ENCODE measurements at regions of chr3 and their contacts with region 1.

Region 1: GRCh38 chr3:113730550-113730949 is 15.5 kb downstream of the NAA50 start:
- DNase-seq: no peak
- H3K4me3 ChIP-seq: no peak overlapping the region
- H3K27ac ChIP-seq: no peak overlapping the region
- H3K4me1 ChIP-seq: no peaks in the 10 kb centered on the region
- H3K27me3 ChIP-seq: no peaks in the 10 kb centered on the region
- CTCF ChIP-seq: no peak

Region 2: DNA sequence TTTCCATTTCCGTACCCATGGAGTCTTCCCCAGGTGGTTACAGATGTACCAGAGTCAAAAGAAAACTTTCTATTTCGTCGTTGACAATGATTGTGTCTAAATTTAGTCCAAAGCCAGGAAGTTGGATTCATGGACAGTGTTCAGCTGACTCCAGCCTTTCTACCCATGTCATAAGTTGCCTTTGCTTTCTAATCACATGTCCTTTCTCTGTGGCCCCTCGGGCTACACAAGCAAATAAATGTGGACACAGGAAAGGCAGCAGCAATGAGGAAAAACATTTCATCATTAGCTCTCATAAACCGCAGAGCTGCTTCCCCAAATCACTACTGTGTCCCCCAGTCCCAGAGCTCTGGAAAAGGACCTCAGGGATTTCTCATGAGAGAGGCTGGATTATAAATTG is 116.1 kb before region 1 on chr3:
- CTCF ChIA-PET with region 1: no interaction called
- POLR2A ChIA-PET with region 1: no interaction called
- intact Hi-C with region 1: no loop called
- DNase-seq: no peak
- H3K4me3 ChIP-seq: no peak overlapping the region
- H3K27ac ChIP-seq: no peak overlapping the region
- H3K4me1 ChIP-seq: no peaks in the 10 kb centered on the region
- H3K27me3 ChIP-seq: no peaks in the 10 kb centered on the region
- CTCF ChIP-seq: no peak

Region 3: GRCh38 chr3:113696658-113697499 is 33.7 kb before region 1 on chr3:
- CTCF ChIA-PET with region 1: no interaction called
- POLR2A ChIA-PET with region 1: interaction called, 11 read pairs
- intact Hi-C with region 1: no loop called
- DNase-seq: peak; percentile 96 to 99
- H3K4me3 ChIP-seq: peak overlapping the region; percentile 76
- H3K27ac ChIP-seq: peak overlapping the region; percentile 40
- H3K4me1 ChIP-seq: peaks cover 13% of the 10 kb centered on the region
- H3K27me3 ChIP-seq: no peaks in the 10 kb centered on the region
- CTCF ChIP-seq: no peak

Region 4: DNA sequence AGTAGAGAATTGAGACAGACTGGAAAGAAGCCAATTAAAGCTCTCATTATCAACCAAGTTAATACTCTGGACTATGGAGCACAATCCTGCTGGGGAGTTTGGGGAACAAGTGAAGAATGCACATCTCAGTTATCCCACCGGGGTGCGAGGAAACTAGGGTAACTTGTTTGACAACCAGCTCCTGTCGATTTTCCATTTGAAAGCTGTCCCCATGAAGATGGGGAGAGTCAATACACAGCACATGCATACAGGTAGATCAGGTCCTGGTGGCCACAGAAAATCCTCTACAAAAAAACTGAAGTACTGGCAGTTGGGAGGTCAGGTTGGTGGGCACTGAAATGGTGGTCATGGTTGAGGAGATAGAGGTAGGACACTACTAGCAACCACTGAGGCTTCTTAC is 82.3 kb after region 1 on chr3:
- CTCF ChIA-PET with region 1: no interaction called
- POLR2A ChIA-PET with region 1: no interaction called
- intact Hi-C with region 1: no loop called
- DNase-seq: no peak
- H3K4me3 ChIP-seq: no peak overlapping the region
- H3K27ac ChIP-seq: no peak overlapping the region
- H3K4me1 ChIP-seq: no peaks in the 10 kb centered on the region
- H3K27me3 ChIP-seq: no peaks in the 10 kb centered on the region
- CTCF ChIP-seq: no peak